A673 (cell line): ENCODE measurements at regions of chr1 and their contacts with region 1.

Region 1: DNA sequence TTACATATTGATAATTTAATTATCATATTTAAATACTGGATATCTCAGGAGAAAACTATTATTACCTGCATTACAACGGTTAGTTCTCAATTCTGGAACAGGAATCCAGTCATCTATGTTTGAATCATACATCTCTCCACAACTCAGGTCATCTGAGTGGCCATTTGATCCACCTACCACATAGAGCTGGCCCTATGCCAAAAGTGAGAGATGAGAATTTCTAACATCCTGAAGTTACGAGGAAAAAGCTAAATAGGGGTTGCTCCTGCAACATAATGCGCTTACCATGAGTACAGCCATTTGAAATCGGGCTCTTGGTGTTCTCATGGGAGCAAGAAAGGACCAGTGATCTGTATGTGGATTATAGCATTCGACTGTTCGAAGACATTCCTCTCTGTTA is 16.9 kb downstream of the IVNS1ABP start:
- DNase-seq: no peak
- H3K4me3 ChIP-seq: no peak overlapping the region
- H3K27ac ChIP-seq: no peak overlapping the region
- H3K4me1 ChIP-seq: no peaks in the 10 kb centered on the region
- H3K27me3 ChIP-seq: no peaks in the 10 kb centered on the region
- CTCF ChIP-seq: no peak

Region 2: GRCh38 chr1:186363891-186364290 is 1063.7 kb after region 1 on chr1:
- CTCF ChIA-PET with region 1: no interaction called
- POLR2A ChIA-PET with region 1: no interaction called
- intact Hi-C with region 1: loop called (anchors 5 kb)
- DNase-seq: no peak
- H3K4me3 ChIP-seq: no peak overlapping the region
- H3K27ac ChIP-seq: no peak overlapping the region
- H3K4me1 ChIP-seq: no peaks in the 10 kb centered on the region
- H3K27me3 ChIP-seq: no peaks in the 10 kb centered on the region
- CTCF ChIP-seq: no peak